ENCODE measurements at regions of chr1 and their contacts with region 1.

Region 1: GRCh38 chr1:149899460-149900293 is at the start of gene BOLA1:
- DNase-seq: peak; percentile 59
- ATAC-seq: peak; percentile 99
- H3K4me3 ChIP-seq: peak within 1 kb of the TSS; percentile 57 to 72
- H3K27ac ChIP-seq: peak within 1 kb of the TSS; percentile 87
- H3K4me1 ChIP-seq: peaks cover 6% of the 10 kb centered on the region
- H3K27me3 ChIP-seq: no peaks in the 10 kb centered on the region
- CTCF ChIP-seq: no peak
- total RNA-seq, gene BOLA1: 14.6 TPM

Region 2: GRCh38 chr1:149886396-149887195 is 13.1 kb before region 1 on chr1:
- CTCF ChIA-PET with region 1: no interaction called
- POLR2A ChIA-PET with region 1: no interaction called
- in situ Hi-C with region 1: no loop called
- intact Hi-C with region 1: no loop called
- DNase-seq: peak; percentile 99
- ATAC-seq: peak; percentile 79
- H3K4me3 ChIP-seq: peak overlapping the region; percentile 91 to 95
- H3K27ac ChIP-seq: peak overlapping the region; percentile 99
- H3K4me1 ChIP-seq: peaks cover 15% of the 10 kb centered on the region
- H3K27me3 ChIP-seq: no peaks in the 10 kb centered on the region
- CTCF ChIP-seq: no peak

Region 3: GRCh38 chr1:149963358-149963757 is 63.7 kb after region 1 on chr1:
- CTCF ChIA-PET with region 1: no interaction called
- POLR2A ChIA-PET with region 1: no interaction called
- in situ Hi-C with region 1: no loop called
- intact Hi-C with region 1: no loop called
- DNase-seq: no peak
- ATAC-seq: no peak
- H3K4me3 ChIP-seq: no peak overlapping the region
- H3K27ac ChIP-seq: no peak overlapping the region
- H3K4me1 ChIP-seq: no peaks in the 10 kb centered on the region
- H3K27me3 ChIP-seq: no peaks in the 10 kb centered on the region
- CTCF ChIP-seq: no peak

Region 4: DNA sequence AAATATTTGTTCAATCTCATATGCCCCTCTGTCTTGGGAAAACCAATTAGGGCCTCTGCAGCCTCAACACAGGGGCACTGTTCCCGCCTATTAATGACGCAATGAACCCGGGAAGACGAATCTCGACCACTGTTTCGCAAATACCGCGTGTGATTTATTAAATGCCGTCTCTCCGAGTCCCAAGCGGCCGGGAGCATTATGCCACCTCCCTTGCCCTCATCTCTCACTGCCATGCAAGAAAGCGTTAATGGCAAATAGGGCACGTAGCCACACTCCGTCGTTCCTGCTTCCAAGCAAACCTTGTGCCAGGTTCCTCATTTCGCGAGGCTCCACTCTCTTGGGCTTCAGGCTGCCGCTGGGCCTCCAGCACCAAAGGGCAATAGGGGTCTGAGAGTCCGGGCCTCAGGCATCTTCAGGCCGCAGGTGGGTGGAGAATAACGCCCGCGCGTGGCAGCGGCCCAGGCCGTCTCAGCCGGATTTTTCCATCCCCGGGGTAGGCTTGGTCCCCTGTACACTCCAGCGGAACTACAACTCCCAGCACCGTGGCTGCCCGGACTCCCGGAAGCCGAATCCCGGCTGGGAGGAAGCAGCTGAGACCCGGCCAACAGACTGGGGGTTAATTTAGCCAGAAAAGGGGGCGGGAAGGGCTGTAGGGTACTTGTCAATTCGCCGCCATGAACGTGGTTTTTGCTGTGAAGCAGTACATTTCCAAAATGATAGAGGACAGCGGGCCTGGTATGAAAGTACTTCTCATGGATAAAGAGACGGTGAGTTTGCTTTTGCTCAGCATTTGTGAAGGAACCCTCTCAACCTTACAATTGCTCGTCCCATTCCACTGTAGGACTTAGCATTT is 167.7 kb after region 1 on chr1 and contains the start of gene VPS45:
- CTCF ChIA-PET with region 1: no interaction called
- POLR2A ChIA-PET with region 1: no interaction called
- in situ Hi-C with region 1: no loop called
- intact Hi-C with region 1: loop called (anchors 10 kb)
- DNase-seq: peak; percentile 79
- ATAC-seq: peak; percentile 99
- H3K4me3 ChIP-seq: peak within 1 kb of the TSS; percentile 89 to 92
- H3K27ac ChIP-seq: peak within 1 kb of the TSS; percentile 99
- H3K4me1 ChIP-seq: peaks cover 8% of the 10 kb centered on the region; the same call in 1 of the 2 replicates
- H3K27me3 ChIP-seq: no peaks in the 10 kb centered on the region
- CTCF ChIP-seq: no peak
- total RNA-seq, gene VPS45: 24.9 TPM

Region 5: DNA sequence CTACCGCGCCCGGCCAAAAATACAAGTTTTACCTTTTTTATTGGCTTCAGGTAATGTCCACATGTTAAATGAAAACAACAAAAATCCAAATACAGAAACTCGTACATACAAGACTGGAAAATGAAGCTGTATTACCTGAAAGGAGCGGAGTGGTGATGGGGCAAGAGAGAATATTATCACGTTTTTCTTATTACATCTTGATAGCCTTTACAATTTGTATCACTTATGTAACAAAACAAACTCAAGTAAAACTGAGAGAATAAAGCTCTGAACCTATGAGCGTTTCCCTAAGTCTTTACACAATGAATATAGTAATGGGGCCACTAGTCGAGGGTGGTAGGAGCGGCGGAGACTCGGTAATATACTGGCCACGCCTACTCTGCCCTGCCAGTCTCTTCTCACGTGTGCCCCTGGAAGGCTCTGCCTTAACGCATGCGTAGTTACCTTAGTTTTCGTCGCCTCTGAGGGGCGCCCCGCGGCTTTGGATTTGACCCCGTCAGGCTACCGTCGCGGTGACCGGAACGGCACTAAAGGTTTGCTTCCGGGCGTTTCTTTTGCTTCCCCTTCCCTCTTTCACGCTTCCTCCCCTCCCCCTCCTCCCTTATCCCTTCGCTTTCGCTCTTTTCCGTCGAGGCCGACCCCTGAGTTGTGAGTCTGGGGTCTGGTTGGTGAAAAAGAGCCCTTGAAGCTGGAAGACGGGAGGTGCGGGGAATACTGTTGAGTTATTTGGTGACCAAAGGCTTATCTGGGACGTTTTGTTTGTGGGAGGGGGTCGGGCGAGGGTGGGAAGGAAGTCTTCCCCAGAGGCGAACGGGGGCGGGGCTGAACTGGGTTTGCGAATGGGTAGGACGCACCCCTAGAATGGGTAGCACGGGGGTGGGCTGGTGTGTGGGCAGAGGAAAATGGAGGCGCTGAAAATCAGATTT is 1026.4 kb after region 1 on chr1 and contains the start of gene SETDB1:
- CTCF ChIA-PET with region 1: no interaction called
- POLR2A ChIA-PET with region 1: no interaction called
- in situ Hi-C with region 1: no loop called
- intact Hi-C with region 1: no loop called
- DNase-seq: peak; percentile 92
- ATAC-seq: peak; percentile 99
- H3K4me3 ChIP-seq: peak within 1 kb of the TSS; percentile 66 to 96
- H3K27ac ChIP-seq: peak within 1 kb of the TSS; percentile 97
- H3K4me1 ChIP-seq: no peaks in the 10 kb centered on the region; the same call in 1 of the 2 replicates
- H3K27me3 ChIP-seq: no peaks in the 10 kb centered on the region
- CTCF ChIP-seq: no peak
- total RNA-seq, gene SETDB1: 43.3 TPM

Measured in Panc1 (cell line).